Transverse colon (tissue), 4 donors: ENCODE measurements at regions of chr3 and their contacts with region 1.

Region 1: DNA sequence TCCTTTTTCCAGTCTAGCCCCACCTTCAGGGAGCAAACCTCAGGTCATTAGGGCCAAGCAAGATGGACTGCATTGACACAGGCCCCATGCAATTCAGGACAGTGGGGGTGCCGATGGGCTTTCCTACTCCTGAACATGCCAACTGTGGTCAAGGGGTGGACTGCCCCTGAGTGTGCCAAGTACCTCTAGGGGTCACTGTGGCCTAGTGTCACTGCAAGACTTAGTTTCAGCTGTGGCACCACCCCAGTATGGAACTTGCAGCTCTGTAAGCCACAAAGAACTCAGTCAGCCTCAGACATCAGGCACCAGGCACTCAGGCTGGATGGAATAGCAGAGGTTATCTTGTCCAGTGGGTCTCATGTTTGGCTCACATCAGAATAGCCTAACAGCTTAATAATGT is 32.3 kb downstream of the EXOG start:
- DNase-seq: no peak
- H3K4me3 ChIP-seq: no peak overlapping the region
- H3K27ac ChIP-seq: no peak overlapping the region
- H3K4me1 ChIP-seq: no peaks in the 10 kb centered on the region
- H3K27me3 ChIP-seq: no peaks in the 10 kb centered on the region
- CTCF ChIP-seq: no peak
- EP300 ChIP-seq: no peak
- POLR2A ChIP-seq: no peak

Region 2: DNA sequence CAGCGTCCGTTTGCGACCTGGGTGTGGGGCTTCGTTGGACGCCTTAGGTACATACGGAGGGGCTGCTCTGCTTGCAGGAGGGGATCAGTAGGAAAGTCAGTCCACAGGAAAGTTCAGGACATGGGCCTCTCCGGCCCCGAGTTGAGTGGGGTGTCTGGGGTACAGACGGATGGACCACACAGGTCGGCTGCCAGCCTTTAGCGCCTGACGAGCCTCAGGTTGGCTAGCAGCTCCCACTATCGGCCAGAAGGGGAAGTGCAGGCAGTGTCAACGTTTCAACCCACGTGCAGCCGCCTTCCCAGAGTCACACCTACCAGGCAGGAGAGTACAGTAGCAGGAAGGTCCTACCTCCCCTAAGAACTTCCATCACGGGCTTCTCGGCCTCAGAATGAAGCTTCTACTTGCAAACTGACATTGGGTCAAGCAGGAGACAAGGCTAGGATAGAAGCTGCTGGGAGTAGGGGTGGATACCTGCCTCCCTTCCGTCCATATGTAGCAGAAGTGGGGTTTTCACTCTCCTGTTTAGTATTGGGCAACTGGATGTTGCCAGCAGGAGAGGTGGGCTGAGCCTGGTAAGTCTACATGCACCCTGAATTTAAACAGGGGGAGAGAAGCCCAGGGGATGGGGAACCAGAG is 122.8 kb after region 1 on chr3:
- in situ Hi-C with region 1: loop called (anchors 5 to 10 kb)
- intact Hi-C with region 1: loop called (anchors 5 kb)
- DNase-seq: peak; percentile 74
- H3K4me3 ChIP-seq: no peak overlapping the region
- H3K27ac ChIP-seq: no peak overlapping the region
- H3K4me1 ChIP-seq: peaks cover 4 to 17% (median 11%) of the 10 kb centered on the region in 4 donors
- H3K27me3 ChIP-seq: peaks cover 44% of the 10 kb centered on the region
- CTCF ChIP-seq: peak; percentile 84 to 99 (median 96)
- EP300 ChIP-seq: no peak
- POLR2A ChIP-seq: no peak

Region 3: DNA sequence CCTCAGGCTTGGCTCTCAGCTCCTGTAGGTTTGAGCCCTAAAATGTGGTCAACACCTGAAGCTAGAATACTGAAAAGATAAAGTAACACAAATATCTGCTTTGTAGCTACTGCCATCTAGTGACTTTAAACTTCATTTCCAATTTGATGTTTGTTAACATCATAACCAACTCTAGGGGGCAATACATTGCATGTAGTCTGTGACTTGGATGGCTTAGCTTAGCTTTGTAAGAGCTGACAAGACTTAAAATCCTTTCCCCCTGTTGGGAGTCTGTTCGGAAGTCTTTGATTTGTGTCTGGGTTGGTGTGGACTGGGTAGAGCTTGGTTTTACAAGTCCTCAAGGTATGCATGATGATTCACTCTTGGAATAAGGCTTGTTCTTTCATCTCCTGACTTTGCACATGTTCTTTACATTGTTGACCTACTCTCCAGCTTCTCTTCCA is 471.6 kb after region 1 on chr3:
- in situ Hi-C with region 1: loop called in 3 of 4 experiments (anchors 25 kb)
- intact Hi-C with region 1: no loop called
- DNase-seq: no peak
- H3K4me3 ChIP-seq: no peak overlapping the region
- H3K27ac ChIP-seq: no peak overlapping the region
- H3K4me1 ChIP-seq: no peaks in the 10 kb centered on the region
- H3K27me3 ChIP-seq: no peaks in the 10 kb centered on the region
- CTCF ChIP-seq: peak in 4 of 5 experiments; percentile 33 to 52 (median 46)
- EP300 ChIP-seq: no peak
- POLR2A ChIP-seq: no peak